Activated naive CD4-positive, alpha-beta T cell treated with anti-CD3 and anti-CD28 coated beads for 36 hours (primary cell): ENCODE measurements at regions of chr2 and their contacts with region 1.

Region 1: GRCh38 chr2:190679813-190680591 is 31.1 kb downstream of the NAB1 start:
- DNase-seq: peak; percentile 75
- H3K4me3 Mint-ChIP-seq: peak overlapping the region; percentile 13
- H3K27ac Mint-ChIP-seq: peak overlapping the region; percentile 81
- H3K4me1 Mint-ChIP-seq: peaks cover 52% of the 10 kb centered on the region
- H3K27me3 Mint-ChIP-seq: no peaks in the 10 kb centered on the region

Region 2: DNA sequence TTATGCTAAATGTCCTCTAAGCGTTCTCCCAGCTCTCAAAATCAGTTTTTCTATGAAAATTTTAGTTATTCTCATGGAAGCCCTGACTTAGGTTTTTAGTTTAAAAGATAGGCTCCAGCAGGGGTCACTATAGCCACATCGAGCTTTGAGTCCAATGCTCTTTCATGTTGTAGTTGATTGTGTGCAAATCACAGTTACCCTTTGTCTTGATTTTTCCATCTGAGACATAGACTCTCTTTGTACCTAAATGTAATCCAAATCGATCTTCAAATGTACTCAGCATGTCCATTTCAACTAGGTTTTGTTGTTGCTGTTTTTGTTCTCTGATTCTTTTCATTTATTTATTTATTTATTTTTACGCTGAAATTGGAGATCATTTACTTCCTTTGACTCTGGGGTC is 591.1 kb before region 1 on chr2:
- CTCF ChIA-PET with region 1: no interaction called
- intact Hi-C with region 1: loop called (anchors 1 kb)
- DNase-seq: peak; percentile 70
- H3K4me3 Mint-ChIP-seq: no peak overlapping the region
- H3K27ac Mint-ChIP-seq: no peak overlapping the region
- H3K4me1 Mint-ChIP-seq: no peaks in the 10 kb centered on the region
- H3K27me3 Mint-ChIP-seq: no peaks in the 10 kb centered on the region

Region 3: GRCh38 chr2:190408538-190409271 is 271.3 kb before region 1 on chr2:
- CTCF ChIA-PET with region 1: no interaction called
- intact Hi-C with region 1: loop called (anchors 1 kb)
- DNase-seq: peak; percentile 71
- H3K4me3 Mint-ChIP-seq: peak overlapping the region; percentile 84
- H3K27ac Mint-ChIP-seq: peak overlapping the region; percentile 90
- H3K4me1 Mint-ChIP-seq: peaks cover 46% of the 10 kb centered on the region
- H3K27me3 Mint-ChIP-seq: no peaks in the 10 kb centered on the region

Region 4: GRCh38 chr2:190636373-190636772 is 43.6 kb before region 1 on chr2:
- CTCF ChIA-PET with region 1: interaction called, 8 read pairs
- intact Hi-C with region 1: loop called (anchors 1 kb)
- DNase-seq: no peak
- H3K4me3 Mint-ChIP-seq: no peak overlapping the region
- H3K27ac Mint-ChIP-seq: no peak overlapping the region
- H3K4me1 Mint-ChIP-seq: peaks cover 9% of the 10 kb centered on the region
- H3K27me3 Mint-ChIP-seq: no peaks in the 10 kb centered on the region

Region 5: GRCh38 chr2:190746971-190747761 is 67.2 kb after region 1 on chr2:
- CTCF ChIA-PET with region 1: no interaction called
- intact Hi-C with region 1: loop called (anchors 1 kb)
- DNase-seq: no peak
- H3K4me3 Mint-ChIP-seq: no peak overlapping the region
- H3K27ac Mint-ChIP-seq: no peak overlapping the region
- H3K4me1 Mint-ChIP-seq: peaks cover 36% of the 10 kb centered on the region
- H3K27me3 Mint-ChIP-seq: no peaks in the 10 kb centered on the region

Region 6: GRCh38 chr2:190802129-190802528 is 122.1 kb after region 1 on chr2:
- CTCF ChIA-PET with region 1: no interaction called
- intact Hi-C with region 1: no loop called
- DNase-seq: no peak
- H3K4me3 Mint-ChIP-seq: no peak overlapping the region
- H3K27ac Mint-ChIP-seq: no peak overlapping the region
- H3K4me1 Mint-ChIP-seq: peaks cover 5% of the 10 kb centered on the region
- H3K27me3 Mint-ChIP-seq: no peaks in the 10 kb centered on the region

Region 7: DNA sequence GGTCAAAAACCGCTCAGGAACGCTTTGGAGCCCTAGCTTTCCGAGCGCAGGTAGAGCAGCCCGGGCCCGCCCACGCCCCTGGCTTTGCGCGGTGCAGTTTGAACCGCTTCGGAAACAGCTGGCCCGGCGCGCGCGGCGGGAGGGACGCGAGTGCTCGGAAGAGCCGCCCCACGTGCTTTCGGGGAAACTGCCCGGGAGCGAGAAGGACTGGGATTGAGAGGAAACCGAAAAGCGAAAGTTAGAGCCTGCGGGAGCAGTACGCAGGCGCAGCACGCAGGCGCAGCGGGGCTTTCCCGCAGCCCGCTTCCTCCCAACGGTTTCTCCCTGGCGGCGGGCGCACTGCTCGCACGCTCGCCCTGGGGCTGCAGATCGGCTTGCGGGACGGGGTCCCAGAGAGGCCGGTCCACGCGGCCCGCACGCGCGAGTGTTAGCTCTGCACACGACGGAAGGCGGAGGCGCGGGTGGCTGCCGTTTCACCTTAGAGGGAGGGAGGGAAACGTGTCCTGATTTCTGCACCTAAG is 340.3 kb after region 1 on chr2:
- CTCF ChIA-PET with region 1: no interaction called
- intact Hi-C with region 1: loop called (anchors 2 kb)
- DNase-seq: peak; percentile 93
- H3K4me3 Mint-ChIP-seq: no peak overlapping the region
- H3K27ac Mint-ChIP-seq: no peak overlapping the region
- H3K4me1 Mint-ChIP-seq: peaks cover 36% of the 10 kb centered on the region
- H3K27me3 Mint-ChIP-seq: no peaks in the 10 kb centered on the region